ENCODE measurements at regions of chr17 and their contacts with region 1.

Region 1: DNA sequence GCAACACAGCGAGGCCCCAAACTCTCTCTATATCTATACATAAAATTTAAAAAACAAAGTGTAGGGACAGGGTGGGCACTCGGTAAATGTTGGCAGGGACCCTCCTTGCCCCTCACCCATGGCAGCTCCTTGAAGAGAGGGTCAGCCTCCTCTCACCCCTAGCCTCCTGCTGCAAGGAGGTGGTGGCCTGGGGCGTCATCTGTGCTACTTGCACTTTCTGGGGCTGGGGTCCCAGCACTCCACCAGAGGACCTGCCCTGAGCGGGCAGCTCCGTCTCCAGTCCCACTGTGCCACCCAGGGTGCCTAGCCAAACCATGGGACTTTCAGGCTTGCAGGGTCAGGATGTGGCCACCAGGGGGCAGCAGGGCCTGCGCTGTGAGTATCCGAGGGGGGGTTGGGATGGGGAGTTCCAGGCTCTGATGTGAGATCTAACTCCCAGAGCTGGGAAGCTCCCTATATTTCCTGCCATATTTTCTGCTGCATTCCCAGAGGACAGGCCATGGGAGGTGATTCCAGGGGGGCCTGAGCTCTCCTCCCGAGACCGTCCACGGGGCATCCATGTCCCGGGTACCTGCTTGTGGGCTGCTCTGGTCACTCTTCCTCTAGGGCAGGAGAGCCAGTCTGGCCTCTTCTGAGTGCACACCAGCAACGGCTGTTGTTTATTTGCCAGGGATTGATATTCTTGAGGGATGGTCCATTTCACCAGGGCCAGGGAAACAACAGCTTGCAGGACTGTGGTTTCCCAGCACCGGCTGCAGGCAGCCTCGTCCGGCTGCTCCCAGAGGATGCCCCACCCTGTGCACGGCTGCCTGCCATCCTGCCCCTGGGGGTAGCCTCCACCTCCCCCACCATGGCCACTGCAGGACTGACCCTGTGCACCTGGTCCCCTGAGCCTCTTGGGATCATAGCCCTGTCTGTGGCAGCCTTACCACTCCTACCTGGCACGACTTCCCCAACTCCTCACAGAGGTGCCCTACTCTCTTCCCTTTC is 1.1 kb downstream of the GPR142 start:
- H3K4me3 ChIP-seq: no peak overlapping the region
- H3K27ac ChIP-seq: no peak overlapping the region
- H3K4me1 ChIP-seq: no peaks in the 10 kb centered on the region
- CTCF ChIP-seq: peak; percentile 81

Region 2: DNA sequence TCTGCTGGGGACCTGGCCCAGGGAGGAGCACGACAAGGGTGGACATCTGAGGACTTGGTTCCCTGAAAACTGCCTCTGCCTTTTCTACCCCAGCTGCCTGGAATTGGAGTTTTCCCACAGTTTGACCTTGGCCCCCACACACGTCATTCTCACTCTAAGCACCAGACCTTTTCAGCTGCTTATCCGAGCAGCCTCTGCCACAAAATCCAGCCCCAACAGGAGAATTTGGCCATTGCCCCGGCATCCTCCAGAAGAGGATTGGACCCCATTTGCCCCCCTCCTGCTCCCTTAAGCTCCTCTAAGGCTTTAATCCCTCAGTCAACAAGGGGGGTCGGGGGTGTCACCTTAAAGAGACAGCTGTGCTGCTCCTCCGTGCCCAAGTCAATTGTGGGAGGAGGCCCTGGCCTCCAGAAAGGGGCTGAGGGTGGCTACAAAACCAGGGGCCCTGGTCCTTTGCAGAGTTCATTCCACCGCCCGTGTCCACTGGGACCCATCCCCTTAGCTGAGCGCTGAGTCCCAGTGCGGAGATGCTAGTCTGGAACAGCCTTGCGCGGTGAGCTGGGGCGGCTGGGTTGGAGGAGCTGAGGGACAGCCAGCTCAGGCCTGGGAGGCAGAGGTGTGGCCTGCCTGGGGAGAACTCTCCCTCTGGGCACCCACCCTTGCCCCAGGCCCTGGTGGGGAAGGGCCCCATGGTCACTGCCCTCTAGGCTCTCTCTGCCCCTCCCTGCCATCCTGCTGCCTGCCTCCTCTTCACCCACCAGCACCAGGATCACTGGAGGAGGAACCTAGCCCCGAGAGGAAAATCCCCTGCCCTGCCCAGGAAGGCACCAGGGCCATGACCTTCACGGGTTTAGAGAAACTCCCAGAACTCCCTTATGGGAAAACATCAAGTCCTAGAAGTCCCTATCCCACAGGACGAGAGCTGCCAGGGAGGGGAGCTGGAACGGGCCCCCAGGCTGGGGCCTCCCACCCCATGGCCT is 136.2 kb before region 1 on chr17:
- CTCF ChIA-PET with region 1: no interaction called
- POLR2A ChIA-PET with region 1: no interaction called
- H3K4me3 ChIP-seq: no peak overlapping the region
- H3K27ac ChIP-seq: no peak overlapping the region
- H3K4me1 ChIP-seq: no peaks in the 10 kb centered on the region
- CTCF ChIP-seq: no peak

Region 3: DNA sequence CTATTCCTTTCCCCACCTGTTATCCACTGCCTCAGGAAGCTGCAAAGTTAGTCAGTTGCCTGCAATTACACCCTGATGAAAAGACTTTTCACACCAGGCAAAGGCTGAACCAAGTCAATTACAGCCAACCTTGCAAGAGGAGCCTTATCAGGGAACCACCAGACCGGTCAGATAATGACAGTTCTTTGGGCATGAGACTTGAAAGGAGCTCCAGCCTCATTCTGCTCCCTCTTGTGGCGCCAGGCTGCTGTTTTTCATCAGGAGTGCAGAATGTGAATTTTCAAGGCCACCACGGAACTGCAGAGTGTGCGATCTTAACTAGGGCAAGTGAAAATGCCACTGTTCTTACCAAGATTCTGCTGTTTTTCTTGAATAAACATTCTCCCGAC is 71.8 kb before region 1 on chr17:
- CTCF ChIA-PET with region 1: interaction called, 104 read pairs
- POLR2A ChIA-PET with region 1: no interaction called
- H3K4me3 ChIP-seq: no peak overlapping the region
- H3K27ac ChIP-seq: no peak overlapping the region
- H3K4me1 ChIP-seq: no peaks in the 10 kb centered on the region
- CTCF ChIP-seq: no peak; the same call in 1 of the 2 replicates

Region 4: DNA sequence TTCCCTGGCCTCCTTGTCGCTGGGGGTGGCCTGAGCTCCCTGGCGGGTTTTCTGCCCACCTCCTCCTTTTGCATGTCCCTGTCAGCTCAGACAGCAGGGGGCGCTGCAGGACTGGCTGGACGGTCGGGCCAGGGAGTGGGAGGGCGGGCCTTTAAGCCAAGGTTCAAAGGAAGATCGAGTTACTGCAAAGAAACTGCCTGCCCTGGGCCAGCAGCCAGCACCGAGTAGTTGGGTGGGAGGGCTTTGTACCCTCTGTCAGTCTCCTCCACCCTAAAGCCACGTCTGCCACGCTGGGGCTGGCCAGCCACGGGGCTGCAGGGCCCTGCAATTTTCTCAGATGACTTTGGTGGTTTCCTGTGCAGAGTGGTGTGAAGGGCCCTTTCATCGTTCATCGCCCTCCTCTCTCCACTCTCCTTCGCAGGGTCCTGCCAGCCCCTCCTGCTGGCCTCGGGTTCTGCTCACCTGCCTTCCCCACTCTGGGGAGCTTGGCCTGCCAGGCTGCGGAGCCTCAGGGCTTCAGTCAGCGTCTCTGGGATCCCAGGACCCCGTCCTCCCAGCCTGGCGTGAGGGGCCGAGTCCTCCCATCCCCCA is 11.2 kb after region 1 on chr17:
- CTCF ChIA-PET with region 1: interaction called, 101 read pairs
- POLR2A ChIA-PET with region 1: interaction called, 5 read pairs
- H3K4me3 ChIP-seq: no peak overlapping the region
- H3K27ac ChIP-seq: no peak overlapping the region
- H3K4me1 ChIP-seq: peaks cover 6% of the 10 kb centered on the region
- CTCF ChIP-seq: peak; percentile 83

Region 5: GRCh38 chr17:74413491-74413890 is 45.1 kb after region 1 on chr17:
- CTCF ChIA-PET with region 1: interaction called, 11 read pairs
- POLR2A ChIA-PET with region 1: no interaction called
- H3K4me3 ChIP-seq: no peak overlapping the region
- H3K27ac ChIP-seq: no peak overlapping the region
- H3K4me1 ChIP-seq: no peaks in the 10 kb centered on the region
- CTCF ChIP-seq: no peak

Region 6: DNA sequence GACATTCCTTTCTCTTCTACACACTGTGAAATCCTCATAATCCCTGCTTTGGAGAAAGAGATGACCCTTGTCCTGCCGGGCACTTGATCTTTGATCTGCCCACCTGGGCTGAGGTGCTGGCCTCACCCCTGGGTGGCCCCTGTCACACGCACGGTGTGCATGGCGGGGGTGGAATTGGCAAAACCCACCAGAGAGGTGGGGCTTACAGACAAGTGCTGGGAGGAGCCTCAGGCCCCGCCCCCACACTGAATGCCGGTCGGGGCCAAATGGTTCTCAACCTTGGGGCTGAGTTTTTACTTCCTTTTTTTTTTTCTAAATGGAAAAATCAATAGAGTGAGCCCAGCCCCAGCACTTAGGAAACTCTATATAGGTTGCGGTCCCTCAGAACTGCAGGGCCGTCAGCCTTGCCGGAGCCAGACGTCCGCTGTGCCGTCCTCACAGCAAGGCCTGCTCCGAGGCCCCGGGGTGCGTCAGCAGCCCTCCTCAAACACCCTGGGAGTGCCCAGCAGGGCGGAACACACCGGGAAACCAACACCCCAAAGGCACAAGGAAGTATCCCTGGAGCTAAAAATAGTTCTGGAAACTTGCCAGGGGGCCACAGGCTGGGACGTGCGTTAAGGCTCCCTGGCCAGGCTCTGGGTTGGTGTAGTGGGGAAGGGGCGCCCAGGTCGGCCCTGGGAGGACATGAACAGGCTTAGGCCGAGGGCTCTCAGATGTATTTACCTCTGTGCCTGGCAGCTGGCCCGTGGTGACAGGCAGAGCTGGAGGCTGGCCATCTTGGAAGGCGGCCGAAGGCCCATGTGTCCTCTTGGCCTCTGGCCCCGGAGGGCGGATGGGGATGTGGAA is 74.5 kb after region 1 on chr17:
- CTCF ChIA-PET with region 1: interaction called, 14 read pairs
- POLR2A ChIA-PET with region 1: no interaction called
- H3K4me3 ChIP-seq: no peak overlapping the region
- H3K27ac ChIP-seq: peak overlapping the region; percentile 73
- H3K4me1 ChIP-seq: peaks cover 5% of the 10 kb centered on the region; the same call in 1 of the 2 replicates
- CTCF ChIP-seq: no peak

Region 7: GRCh38 chr17:74502861-74503260 is 134.5 kb after region 1 on chr17:
- CTCF ChIA-PET with region 1: interaction called, 46 read pairs
- POLR2A ChIA-PET with region 1: no interaction called
- H3K4me3 ChIP-seq: no peak overlapping the region
- H3K27ac ChIP-seq: no peak overlapping the region
- H3K4me1 ChIP-seq: no peaks in the 10 kb centered on the region
- CTCF ChIP-seq: no peak

Measured in HEK293 (cell line).